Activated CD4-positive, alpha-beta T cell treated with anti-CD3 and anti-CD28 coated beads for 36 hours (primary cell): ENCODE measurements at regions of chr17 and their contacts with region 1.

Region 1: GRCh38 chr17:40203131-40203530 is 16.0 kb upstream of the WIPF2 start:
- DNase-seq: no peak
- ATAC-seq: no peak
- H3K4me3 Mint-ChIP-seq: no peak overlapping the region
- H3K27ac Mint-ChIP-seq: no peak overlapping the region
- H3K4me1 Mint-ChIP-seq: peaks cover 5% of the 10 kb centered on the region
- H3K27me3 Mint-ChIP-seq: peaks cover 2% of the 10 kb centered on the region

Region 2: DNA sequence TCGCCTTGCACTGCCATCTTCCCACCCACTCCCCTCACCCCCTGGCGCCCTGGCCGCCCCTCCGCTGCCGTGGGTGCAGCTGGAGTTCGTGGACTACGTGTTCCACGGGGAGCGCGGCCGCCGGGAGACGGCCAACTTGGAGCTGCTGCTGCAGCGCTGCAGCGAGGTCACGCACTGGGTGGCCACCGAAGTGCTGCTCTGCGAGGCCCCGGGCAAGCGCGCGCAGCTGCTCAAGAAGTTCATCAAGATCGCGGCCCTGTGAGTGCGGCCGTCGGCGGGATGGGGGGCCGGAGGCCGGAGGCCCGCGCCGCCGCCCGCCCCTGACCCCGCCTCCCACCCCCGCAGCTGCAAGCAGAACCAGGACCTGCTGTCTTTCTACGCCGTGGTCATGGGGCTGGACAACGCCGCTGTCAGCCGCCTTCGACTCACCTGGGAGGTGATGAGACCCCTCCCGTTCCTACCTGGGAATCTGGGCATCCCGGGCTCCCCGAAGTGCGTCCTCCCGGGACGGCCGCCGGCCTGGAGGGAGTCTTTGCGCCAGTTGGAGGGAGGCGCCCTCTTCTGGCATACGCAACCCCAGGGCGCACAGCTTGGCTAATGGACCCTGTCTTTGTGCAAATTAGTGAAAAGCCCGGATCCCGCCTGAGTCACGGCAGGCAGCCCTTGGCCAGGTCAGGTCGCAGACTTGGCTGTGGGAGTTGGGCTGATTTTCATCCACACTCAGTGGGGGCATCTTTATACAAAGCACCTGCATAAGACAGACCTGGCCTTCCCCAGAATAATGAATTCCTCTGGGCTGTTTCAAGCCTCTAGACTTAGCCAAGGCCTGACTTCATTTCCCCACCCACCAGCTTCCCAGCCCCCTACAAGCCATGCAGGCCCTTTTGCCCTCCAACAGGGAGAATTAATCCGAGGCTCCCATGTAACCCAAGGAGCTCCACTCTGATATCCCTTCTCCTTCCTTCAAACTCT is 11.6 kb before region 1 on chr17:
- CTCF ChIA-PET with region 1: interaction called, 28 read pairs
- POLR2A ChIA-PET with region 1: no interaction called
- intact Hi-C with region 1: no loop called
- DNase-seq: peak; percentile 84
- ATAC-seq: peak; percentile 91
- H3K4me3 Mint-ChIP-seq: peak overlapping the region; percentile 79
- H3K27ac Mint-ChIP-seq: peak overlapping the region; percentile 76
- H3K4me1 Mint-ChIP-seq: peaks cover 7% of the 10 kb centered on the region
- H3K27me3 Mint-ChIP-seq: no peaks in the 10 kb centered on the region

Region 3: DNA sequence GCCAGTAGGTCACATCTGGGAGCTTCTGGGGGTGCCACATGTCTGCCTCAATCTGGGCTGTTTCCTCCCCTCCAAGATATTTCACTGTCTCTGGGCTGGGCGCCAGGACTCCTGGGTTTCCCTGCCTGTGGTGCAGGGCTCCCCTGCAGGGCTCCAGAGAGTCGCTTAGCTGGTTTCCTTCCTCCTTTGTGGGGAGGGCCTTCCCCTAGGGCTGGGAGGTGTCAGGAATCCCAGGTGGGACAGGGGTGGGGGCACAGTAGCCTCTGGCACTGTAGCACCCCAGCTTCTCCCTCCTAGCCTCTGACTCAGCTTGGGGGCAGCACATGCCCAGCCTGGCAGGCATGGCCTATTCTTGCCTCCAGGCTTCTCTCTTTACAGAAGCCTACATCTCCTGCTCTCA is 108.4 kb after region 1 on chr17:
- CTCF ChIA-PET with region 1: no interaction called
- POLR2A ChIA-PET with region 1: no interaction called
- intact Hi-C with region 1: no loop called
- DNase-seq: no peak
- ATAC-seq: no peak
- H3K4me3 Mint-ChIP-seq: no peak overlapping the region
- H3K27ac Mint-ChIP-seq: no peak overlapping the region
- H3K4me1 Mint-ChIP-seq: peaks cover 54% of the 10 kb centered on the region
- H3K27me3 Mint-ChIP-seq: no peaks in the 10 kb centered on the region